Activated CD4-positive, alpha-beta T cell treated with anti-CD3 and anti-CD28 coated beads, Interleukin-2, amount 10 ng/mL, durations not matched to agents 24 days and 14 days (primary cell): ENCODE measurements at regions of chr21 and their contacts with region 1.

Region 1: GRCh38 chr21:46637952-46638746 is 2.7 kb downstream of the PRMT2 start:
- DNase-seq: no peak
- H3K4me3 Mint-ChIP-seq: peak overlapping the region; percentile 78
- H3K27ac Mint-ChIP-seq: peak overlapping the region; percentile 87
- H3K4me1 Mint-ChIP-seq: peaks cover 60% of the 10 kb centered on the region
- H3K27me3 Mint-ChIP-seq: no peaks in the 10 kb centered on the region

Region 2: GRCh38 chr21:46458315-46459023 is 179.7 kb before region 1 on chr21 and contains the start of gene DIP2A:
- intact Hi-C with region 1: loop called (anchors 1 kb)
- DNase-seq: peak; percentile 98
- H3K4me3 Mint-ChIP-seq: peak within 1 kb of the TSS; percentile 93
- H3K27ac Mint-ChIP-seq: peak within 1 kb of the TSS; percentile 96
- H3K4me1 Mint-ChIP-seq: peaks cover 37% of the 10 kb centered on the region
- H3K27me3 Mint-ChIP-seq: no peaks in the 10 kb centered on the region
- total RNA-seq, gene DIP2A: 30.5 and 31.3 TPM in 2 replicates

Region 3: GRCh38 chr21:46559291-46559983 is 78.7 kb before region 1 on chr21:
- intact Hi-C with region 1: loop called (anchors 2 kb)
- DNase-seq: peak; percentile 87
- H3K4me3 Mint-ChIP-seq: peak overlapping the region; percentile 82
- H3K27ac Mint-ChIP-seq: peak overlapping the region; percentile 97
- H3K4me1 Mint-ChIP-seq: peaks cover 29% of the 10 kb centered on the region
- H3K27me3 Mint-ChIP-seq: no peaks in the 10 kb centered on the region

Region 4: DNA sequence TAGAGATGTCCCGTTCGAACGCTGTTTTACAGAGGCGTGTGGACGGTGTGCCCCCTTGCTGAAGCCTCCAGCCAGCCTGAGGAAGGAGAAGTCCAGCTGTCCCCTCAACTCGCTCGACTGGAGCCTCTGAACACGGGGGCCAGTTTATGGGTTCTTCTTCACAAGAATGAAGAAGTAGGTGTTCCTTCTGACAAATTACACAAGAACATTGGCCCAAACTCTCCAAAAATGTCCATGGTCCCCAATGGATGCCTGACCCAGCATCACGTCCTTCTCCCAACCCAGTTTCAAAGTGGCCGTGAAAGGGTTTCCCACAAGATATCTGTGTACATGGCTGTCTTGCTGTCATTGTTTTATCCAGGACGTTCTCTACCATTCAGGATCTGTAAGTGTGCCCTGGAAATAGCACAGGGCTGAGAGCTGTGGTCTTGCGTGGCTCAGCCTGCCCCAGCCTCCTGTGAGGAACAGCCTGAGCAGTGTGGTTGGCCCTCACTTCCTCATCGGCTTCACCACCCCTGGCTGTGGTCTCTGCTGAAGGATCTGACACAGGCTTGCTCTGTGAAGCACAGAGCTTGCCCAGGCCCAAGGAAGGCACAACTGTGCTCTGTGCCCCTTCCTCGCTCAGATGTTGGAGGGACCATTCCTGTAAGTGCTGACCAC is 32.3 kb before region 1 on chr21:
- intact Hi-C with region 1: no loop called
- DNase-seq: peak; percentile 85
- H3K4me3 Mint-ChIP-seq: peak overlapping the region; percentile 41
- H3K27ac Mint-ChIP-seq: peak overlapping the region; percentile 73
- H3K4me1 Mint-ChIP-seq: peaks cover 19% of the 10 kb centered on the region
- H3K27me3 Mint-ChIP-seq: peaks cover 1% of the 10 kb centered on the region